Endothelial cell of umbilical vein (primary cell): ENCODE measurements at regions of chr2 and their contacts with region 1.

Region 1: GRCh38 chr2:179410552-179411356 is 146.1 kb upstream of the SESTD1 start:
- DNase-seq: peak; percentile 60
- H3K4me3 ChIP-seq: no peak overlapping the region
- H3K27ac ChIP-seq: no peak overlapping the region
- H3K4me1 ChIP-seq: no peaks in the 10 kb centered on the region
- H3K27me3 ChIP-seq: no peaks in the 10 kb centered on the region
- CTCF ChIP-seq: peak; percentile 67 to 68
- POLR2A ChIP-seq: no peak

Region 2: GRCh38 chr2:179049546-179050311 is 361.0 kb before region 1 on chr2 and contains the start of gene CCDC141:
- CTCF ChIA-PET with region 1: no interaction called
- POLR2A ChIA-PET with region 1: no interaction called
- dilution Hi-C with region 1: no loop called
- intact Hi-C with region 1: no loop called
- DNase-seq: no peak
- H3K4me3 ChIP-seq: no peak within 1 kb of the TSS
- H3K27ac ChIP-seq: no peak within 1 kb of the TSS
- H3K4me1 ChIP-seq: no peaks in the 10 kb centered on the region
- H3K27me3 ChIP-seq: peaks cover 0 to 2% of the 10 kb centered on the region in 2 experiments
- CTCF ChIP-seq: no peak
- POLR2A ChIP-seq: no peak
- total RNA-seq, gene CCDC141: not detected in 2 replicates

Region 3: DNA sequence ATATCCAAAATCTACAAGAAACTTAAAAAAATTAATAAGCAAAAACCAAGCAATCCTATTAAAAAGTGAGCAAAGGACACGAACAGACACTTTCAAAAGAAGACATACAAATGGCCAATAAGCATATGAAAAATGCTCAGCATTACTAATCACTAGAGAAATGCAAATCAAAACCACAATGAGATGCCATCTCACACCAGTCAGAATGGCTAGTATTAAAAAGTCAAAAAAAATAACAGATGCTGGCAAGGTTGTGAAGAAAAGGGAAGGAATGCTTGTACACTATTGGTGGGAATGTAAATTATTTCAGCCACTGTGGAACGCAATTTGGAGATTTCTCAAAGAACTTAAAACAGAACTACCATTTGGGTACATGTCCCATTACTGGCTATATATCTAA is 17.3 kb before region 1 on chr2:
- CTCF ChIA-PET with region 1: interaction called, 11 read pairs
- POLR2A ChIA-PET with region 1: no interaction called
- dilution Hi-C with region 1: no loop called
- intact Hi-C with region 1: no loop called
- DNase-seq: no peak
- H3K4me3 ChIP-seq: no peak overlapping the region
- H3K27ac ChIP-seq: no peak overlapping the region
- H3K4me1 ChIP-seq: no peaks in the 10 kb centered on the region
- H3K27me3 ChIP-seq: no peaks in the 10 kb centered on the region
- CTCF ChIP-seq: no peak
- POLR2A ChIP-seq: no peak

Region 4: GRCh38 chr2:179745635-179746256 is 335.0 kb after region 1 on chr2:
- CTCF ChIA-PET with region 1: interaction called, 27 read pairs
- POLR2A ChIA-PET with region 1: no interaction called
- dilution Hi-C with region 1: no loop called
- intact Hi-C with region 1: no loop called
- DNase-seq: no peak
- H3K4me3 ChIP-seq: no peak overlapping the region
- H3K27ac ChIP-seq: no peak overlapping the region
- H3K4me1 ChIP-seq: no peaks in the 10 kb centered on the region
- H3K27me3 ChIP-seq: peaks cover 1 to 6% of the 10 kb centered on the region in 2 experiments
- CTCF ChIP-seq: no peak
- POLR2A ChIP-seq: no peak

Region 5: GRCh38 chr2:179758636-179759035 is 347.9 kb after region 1 on chr2:
- CTCF ChIA-PET with region 1: interaction called, 12 read pairs
- POLR2A ChIA-PET with region 1: no interaction called
- dilution Hi-C with region 1: no loop called
- intact Hi-C with region 1: no loop called
- DNase-seq: no peak
- H3K4me3 ChIP-seq: no peak overlapping the region
- H3K27ac ChIP-seq: no peak overlapping the region
- H3K4me1 ChIP-seq: no peaks in the 10 kb centered on the region
- H3K27me3 ChIP-seq: no peaks in the 10 kb centered on the region
- CTCF ChIP-seq: no peak
- POLR2A ChIP-seq: no peak

Region 6: DNA sequence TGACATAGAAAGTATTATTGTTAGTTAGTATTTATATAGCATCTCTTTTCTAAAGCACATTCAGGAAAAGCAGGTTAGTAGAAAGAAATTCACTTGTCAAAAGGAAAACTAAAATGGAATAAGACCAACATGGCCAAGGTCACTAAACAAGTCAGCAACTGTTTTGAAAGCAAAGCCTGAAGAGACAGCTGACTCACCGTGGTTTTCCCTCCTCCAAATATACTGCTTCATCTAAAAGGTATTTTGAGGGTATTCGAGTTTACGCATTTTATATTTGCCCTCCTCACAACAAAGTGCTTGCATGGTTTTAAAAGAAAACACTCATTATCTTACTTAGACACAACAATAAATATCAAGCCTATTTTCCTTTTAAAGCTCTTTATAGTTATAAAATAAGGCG is 426.7 kb after region 1 on chr2:
- CTCF ChIA-PET with region 1: no interaction called
- POLR2A ChIA-PET with region 1: no interaction called
- dilution Hi-C with region 1: no loop called
- intact Hi-C with region 1: no loop called
- DNase-seq: no peak
- H3K4me3 ChIP-seq: no peak overlapping the region
- H3K27ac ChIP-seq: no peak overlapping the region
- H3K4me1 ChIP-seq: no peaks in the 10 kb centered on the region
- H3K27me3 ChIP-seq: peaks cover 2% of the 10 kb centered on the region in 2 experiments
- CTCF ChIP-seq: no peak
- POLR2A ChIP-seq: no peak